Activated naive CD8-positive, alpha-beta T cell treated with anti-CD3 and anti-CD28 coated beads, Interleukin-2, amount 10 ng/mL, durations not matched to agents 7 days and 5 days (primary cell): ENCODE measurements at regions of chr19 and their contacts with region 1.

Region 1: GRCh38 chr19:12681074-12681951 is at the start of gene DHPS:
- DNase-seq: peak; percentile 82
- ATAC-seq: peak; percentile 75
- H3K4me3 Mint-ChIP-seq: peak within 1 kb of the TSS; percentile 89
- H3K27ac Mint-ChIP-seq: peak within 1 kb of the TSS; percentile 89
- H3K4me1 Mint-ChIP-seq: peaks cover 18% of the 10 kb centered on the region
- H3K27me3 Mint-ChIP-seq: no peaks in the 10 kb centered on the region
- total RNA-seq, gene DHPS: 148 to 149 TPM

Region 2: DNA sequence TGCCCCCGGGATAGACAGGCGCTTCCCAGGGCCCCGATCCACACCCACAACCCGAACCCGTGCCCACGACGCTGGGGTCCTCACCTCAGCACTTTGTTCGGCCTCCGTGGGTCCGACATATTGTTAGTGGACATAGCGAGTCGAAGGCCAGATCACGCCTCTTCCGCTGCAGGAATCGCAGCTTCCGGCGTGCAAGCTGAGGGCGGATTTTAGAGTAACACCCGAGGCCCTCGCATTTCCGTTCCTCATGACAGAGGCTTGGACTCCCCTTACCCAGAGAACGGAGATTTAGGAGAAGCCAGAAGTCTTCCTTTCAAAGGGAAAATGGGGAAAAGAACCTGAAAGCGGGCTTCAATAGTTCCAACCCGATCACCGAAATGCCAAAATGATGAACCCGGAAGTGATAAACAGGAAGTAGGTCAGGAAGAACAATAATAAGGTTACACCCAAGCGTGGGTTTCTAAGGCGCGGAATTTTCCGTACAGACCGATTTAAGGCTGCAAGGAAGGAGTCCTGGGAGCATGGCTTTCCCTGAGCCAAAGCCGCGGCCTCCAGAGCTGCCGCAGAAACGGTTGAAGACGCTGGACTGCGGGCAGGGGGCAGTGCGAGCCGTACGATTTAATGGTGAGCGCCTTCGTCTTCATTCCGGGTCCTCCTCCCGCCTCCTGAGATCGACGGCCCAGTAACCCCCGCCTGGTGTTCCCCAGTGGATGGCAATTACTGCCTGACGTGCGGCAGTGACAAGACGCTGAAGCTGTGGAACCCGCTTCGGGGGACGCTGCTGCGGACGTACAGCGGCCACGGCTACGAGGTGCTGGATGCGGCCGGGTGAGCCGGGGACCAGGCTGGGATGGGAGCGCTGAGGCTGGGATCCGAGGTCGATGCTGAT is 11.8 kb before region 1 on chr19:
- POLR2A ChIA-PET with region 1: interaction called, 19 read pairs
- DNase-seq: peak; percentile 80
- ATAC-seq: peak; percentile 22
- H3K4me3 Mint-ChIP-seq: peak overlapping the region; percentile 99
- H3K27ac Mint-ChIP-seq: peak overlapping the region; percentile 100
- H3K4me1 Mint-ChIP-seq: peaks cover 35% of the 10 kb centered on the region
- H3K27me3 Mint-ChIP-seq: no peaks in the 10 kb centered on the region

Region 3: DNA sequence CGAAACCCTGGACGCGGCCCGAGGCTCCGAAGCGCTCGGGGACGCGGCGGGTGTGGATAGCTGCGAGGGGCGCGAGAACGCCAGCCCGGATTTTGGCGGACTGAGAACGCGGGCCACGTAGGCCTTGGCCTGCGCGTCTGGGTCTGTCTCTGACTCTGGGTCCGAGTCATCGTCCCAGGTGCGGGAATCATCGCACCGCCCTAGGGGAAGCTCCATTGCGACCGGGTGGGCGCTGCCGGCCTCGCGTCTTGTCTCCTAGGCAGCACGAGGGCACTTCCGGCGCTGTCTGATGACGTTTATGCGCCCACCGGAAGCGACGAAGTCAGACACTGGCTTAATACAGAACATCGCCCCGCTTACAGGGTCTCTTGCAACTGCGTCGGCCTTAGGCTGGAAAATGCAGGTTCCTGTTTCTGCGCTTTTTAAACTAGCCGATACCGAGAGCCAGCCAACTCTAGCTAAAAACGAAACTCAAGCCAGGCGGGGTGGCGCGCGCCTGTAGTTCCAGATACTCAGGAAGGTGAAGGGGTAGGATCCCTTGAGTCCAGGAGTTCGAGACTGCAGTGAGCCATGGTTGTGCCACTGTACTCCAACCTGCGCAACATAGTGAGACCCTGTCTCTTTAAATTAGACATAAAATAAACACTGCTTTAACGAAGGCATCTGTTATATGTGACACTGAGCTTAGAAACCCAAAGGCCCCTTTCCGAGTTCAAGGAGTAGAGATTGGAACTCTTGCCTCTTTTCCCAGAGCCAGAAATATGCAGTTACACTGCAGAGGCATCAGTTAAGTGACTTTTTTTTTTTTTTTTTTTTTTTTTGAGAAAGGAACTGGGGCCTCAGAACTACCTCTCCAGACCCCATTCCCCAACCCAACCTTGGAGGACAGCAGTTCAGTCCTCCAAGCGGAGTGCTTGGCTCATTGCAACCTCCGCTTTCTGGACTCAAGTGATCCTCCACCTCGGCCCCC is 15.3 kb after region 1 on chr19 and contains the start of gene FBXW9:
- POLR2A ChIA-PET with region 1: interaction called, 21 read pairs
- DNase-seq: peak; percentile 98
- ATAC-seq: peak; percentile 84
- H3K4me3 Mint-ChIP-seq: peak within 1 kb of the TSS; percentile 93
- H3K27ac Mint-ChIP-seq: peak within 1 kb of the TSS; percentile 97
- H3K4me1 Mint-ChIP-seq: peaks cover 10% of the 10 kb centered on the region
- H3K27me3 Mint-ChIP-seq: no peaks in the 10 kb centered on the region
- total RNA-seq, gene FBXW9: 4.9 to 5.3 TPM

Region 4: DNA sequence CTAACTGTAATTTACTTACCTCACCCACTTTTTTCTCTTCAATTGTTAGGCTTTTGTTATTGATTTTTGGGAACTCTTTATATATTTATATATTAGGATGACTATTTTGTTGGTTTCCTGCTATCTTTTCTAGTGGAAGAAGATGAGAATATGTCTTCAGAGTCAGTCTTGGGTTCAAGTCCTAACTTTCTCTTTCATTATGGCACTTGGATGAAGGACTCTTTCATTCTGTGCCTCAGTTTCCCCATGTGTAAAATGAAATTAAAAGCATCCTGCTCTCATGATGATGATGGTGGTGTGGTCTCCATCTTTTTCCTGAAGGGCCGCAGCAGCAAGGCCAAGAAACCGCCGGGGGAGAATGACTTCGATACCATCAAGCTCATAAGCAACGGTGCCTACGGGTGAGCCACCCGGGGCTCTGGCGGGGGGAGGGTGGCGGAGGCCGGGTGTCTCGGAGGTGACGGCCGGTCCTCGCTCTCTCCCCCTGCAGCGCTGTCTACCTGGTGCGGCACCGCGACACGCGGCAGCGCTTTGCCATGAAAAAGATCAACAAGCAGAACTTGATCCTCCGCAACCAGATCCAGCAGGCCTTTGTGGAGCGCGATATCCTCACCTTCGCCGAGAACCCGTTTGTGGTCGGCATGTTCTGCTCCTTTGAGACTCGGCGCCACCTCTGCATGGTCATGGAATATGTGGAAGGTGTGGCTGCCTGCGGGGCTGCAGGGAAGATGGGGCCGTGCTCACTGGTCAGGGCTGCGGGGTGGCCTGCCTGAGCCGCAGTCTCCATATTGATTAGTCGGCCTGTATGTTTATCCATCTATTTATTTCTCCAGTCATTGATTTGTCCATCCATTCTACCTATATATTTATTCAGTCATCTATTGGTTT is 177.0 kb after region 1 on chr19:
- POLR2A ChIA-PET with region 1: no interaction called
- DNase-seq: no peak
- ATAC-seq: no peak
- H3K4me3 Mint-ChIP-seq: no peak overlapping the region
- H3K27ac Mint-ChIP-seq: no peak overlapping the region
- H3K4me1 Mint-ChIP-seq: no peaks in the 10 kb centered on the region
- H3K27me3 Mint-ChIP-seq: peaks cover 12% of the 10 kb centered on the region

Region 5: GRCh38 chr19:13441810-13442512 is 760.6 kb after region 1 on chr19:
- POLR2A ChIA-PET with region 1: no interaction called
- DNase-seq: peak; percentile 54
- ATAC-seq: no peak
- H3K4me3 Mint-ChIP-seq: no peak overlapping the region
- H3K27ac Mint-ChIP-seq: no peak overlapping the region
- H3K4me1 Mint-ChIP-seq: no peaks in the 10 kb centered on the region
- H3K27me3 Mint-ChIP-seq: no peaks in the 10 kb centered on the region